ENCODE measurements at regions of chr6 and their contacts with region 1.

Region 1: DNA sequence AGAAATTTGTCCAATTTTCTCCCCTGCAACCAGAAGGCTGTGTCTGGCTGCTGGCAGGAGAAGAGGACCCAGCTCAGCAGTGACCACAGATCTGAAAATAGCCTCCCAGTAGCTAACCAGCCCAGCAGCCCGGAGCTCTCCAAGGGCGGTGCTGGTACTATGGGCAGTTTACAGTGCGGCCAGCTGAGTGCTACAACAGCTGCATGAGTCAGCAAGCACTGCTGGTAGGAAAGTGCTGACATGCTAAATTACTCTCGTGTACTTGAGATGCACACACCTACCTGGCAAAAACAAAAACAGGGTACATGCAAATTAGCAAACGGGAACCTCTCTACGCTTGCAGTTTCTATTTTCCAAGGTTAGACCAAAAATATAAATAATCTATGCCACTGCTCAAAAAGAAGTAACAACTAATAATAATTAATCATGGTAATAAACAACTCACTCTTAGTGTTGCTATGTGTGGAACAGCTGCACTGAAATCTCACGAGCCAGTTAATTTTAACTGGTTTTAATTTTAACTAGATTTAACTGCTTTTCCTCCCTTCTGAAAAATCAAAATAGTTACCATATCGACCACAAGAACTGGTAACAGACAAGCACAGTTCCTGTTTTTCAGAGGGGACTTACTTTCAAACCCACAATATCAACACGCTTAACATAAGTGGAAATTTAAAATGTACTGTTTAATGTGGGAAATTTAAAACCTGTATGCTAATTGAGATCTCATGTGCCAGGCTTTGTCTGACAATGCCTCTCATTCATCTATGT is 10.8 kb downstream of the BACH2 start:
- DNase-seq: peak; percentile 73
- H3K4me3 ChIP-seq: peak overlapping the region; percentile 65
- H3K27ac ChIP-seq: peak overlapping the region; percentile 84
- H3K4me1 ChIP-seq: peaks cover 93% of the 10 kb centered on the region
- CTCF ChIP-seq: no peak

Region 2: GRCh38 chr6:89172131-89172530 is 1113.7 kb before region 1 on chr6:
- CTCF ChIA-PET with region 1: no interaction called
- POLR2A ChIA-PET with region 1: no interaction called
- intact Hi-C with region 1: no loop called
- DNase-seq: no peak
- H3K4me3 ChIP-seq: no peak overlapping the region
- H3K27ac ChIP-seq: no peak overlapping the region
- H3K4me1 ChIP-seq: no peaks in the 10 kb centered on the region
- CTCF ChIP-seq: no peak

Region 3: DNA sequence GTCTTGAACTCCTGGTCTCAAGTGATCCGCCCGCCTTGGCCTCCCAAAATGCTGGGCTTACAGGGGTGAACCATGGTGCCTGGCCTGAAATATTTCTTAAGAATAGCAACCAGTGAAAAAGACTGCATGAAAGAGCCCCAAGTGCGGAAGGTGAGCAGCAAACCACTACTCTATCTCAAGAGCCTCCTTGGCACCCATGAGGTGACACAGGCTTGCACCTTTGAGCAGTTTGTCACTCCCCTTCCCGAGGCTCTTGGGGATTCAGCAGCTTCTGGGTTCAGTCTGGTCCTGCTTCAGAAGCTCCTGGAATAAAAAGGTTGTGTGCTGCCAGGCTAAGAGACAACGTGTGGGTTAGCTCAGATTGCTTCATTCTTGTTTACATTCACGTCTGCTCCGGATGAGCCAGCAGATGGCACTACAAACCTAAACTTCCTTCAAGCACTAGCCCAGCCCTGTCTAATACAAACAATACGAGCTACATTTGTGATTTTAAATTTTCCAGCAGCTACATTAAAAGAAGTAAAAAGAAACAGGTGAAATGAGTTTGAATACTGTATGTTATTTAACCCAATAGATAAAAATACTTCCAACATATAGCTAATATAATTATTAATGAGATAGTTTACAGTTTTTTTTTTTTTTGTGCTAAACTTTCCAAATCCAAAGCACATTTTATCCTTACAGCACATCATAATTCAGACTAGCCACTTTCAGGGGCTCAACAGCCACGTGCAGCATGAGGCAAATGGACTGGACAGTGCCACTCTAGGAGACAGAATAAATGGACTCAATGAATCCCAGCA is 345.4 kb before region 1 on chr6:
- CTCF ChIA-PET with region 1: interaction called, 3 read pairs
- POLR2A ChIA-PET with region 1: interaction called, 4 read pairs
- intact Hi-C with region 1: loop called (anchors 1 kb)
- DNase-seq: peak; percentile 71
- H3K4me3 ChIP-seq: no peak overlapping the region
- H3K27ac ChIP-seq: no peak overlapping the region
- H3K4me1 ChIP-seq: no peaks in the 10 kb centered on the region
- CTCF ChIP-seq: peak; percentile 89

Region 4: DNA sequence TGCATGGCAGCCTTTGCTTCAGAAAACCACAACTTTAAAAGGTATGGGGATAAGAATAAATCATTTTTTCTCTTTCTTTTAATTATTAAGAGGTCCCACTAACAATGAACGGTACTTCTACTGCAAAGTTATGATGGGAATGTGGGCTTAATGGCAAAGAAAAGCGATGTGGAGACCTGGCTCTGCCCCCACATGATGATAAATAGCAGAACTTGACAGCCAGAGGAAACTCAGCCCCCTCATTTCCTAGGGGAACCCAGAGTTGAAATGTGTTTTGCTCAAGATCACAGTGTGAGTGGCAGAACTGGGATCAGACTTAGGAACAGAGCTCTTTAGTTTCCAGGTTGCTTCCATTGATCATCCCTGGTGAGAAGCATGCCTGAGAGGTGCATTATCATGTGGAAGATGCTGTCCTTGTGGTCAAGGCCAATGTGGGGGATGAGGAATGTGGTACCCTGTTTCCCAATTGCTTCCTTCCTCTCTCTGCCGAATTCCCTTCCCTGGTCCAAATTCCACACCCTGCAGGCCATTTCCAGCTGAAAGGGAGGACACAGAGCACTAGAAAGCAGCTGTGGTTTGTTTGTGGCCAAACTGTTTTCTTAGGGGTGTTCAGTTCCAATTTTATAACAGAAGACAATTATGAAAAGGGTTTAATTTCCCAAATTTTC is 55.1 kb before region 1 on chr6:
- CTCF ChIA-PET with region 1: no interaction called
- POLR2A ChIA-PET with region 1: no interaction called
- intact Hi-C with region 1: no loop called
- DNase-seq: no peak
- H3K4me3 ChIP-seq: no peak overlapping the region
- H3K27ac ChIP-seq: no peak overlapping the region
- H3K4me1 ChIP-seq: peaks cover 11% of the 10 kb centered on the region
- CTCF ChIP-seq: no peak

Region 5: GRCh38 chr6:90274451-90275030 is 11.3 kb before region 1 on chr6:
- CTCF ChIA-PET with region 1: no interaction called
- POLR2A ChIA-PET with region 1: interaction called, 25 read pairs
- intact Hi-C with region 1: no loop called
- DNase-seq: peak; percentile 84
- H3K4me3 ChIP-seq: peak overlapping the region; percentile 52
- H3K27ac ChIP-seq: peak overlapping the region; percentile 79
- H3K4me1 ChIP-seq: peaks cover 87% of the 10 kb centered on the region
- CTCF ChIP-seq: peak; percentile 71

Region 6: DNA sequence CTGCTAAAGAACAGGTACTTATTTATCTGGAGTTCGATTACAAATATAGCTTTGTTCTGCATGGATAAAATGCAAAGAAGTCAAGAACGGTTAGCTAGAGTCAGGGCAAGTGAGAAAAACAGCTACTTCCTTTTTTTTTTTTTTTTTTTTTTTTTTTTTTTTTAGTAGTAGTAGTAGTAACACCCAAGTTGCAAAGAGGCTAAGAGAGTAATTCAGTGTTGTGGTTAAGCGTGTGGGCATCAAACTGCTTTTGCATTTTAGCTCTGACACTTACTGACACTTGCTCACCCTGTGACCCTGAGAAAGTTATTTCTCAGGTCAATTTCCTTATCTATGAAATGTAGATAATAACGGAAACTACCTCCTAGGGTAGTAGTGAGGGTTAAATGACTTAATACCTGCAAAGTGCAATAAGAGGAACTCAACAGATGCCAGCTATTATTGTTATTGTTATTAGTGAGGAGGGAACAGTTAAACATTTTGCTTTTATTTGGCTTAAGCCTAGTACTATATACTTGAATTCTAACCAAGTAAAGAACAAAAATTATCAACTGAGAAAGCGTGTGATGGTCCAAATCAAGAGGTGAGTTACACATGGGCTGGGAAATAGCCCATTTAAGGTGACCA is 97.5 kb after region 1 on chr6:
- CTCF ChIA-PET with region 1: no interaction called
- POLR2A ChIA-PET with region 1: interaction called, 13 read pairs
- intact Hi-C with region 1: no loop called
- DNase-seq: peak; percentile 89
- H3K4me3 ChIP-seq: peak overlapping the region; percentile 59
- H3K27ac ChIP-seq: peak overlapping the region; percentile 97
- H3K4me1 ChIP-seq: peaks cover 97% of the 10 kb centered on the region
- CTCF ChIP-seq: no peak

Region 7: GRCh38 chr6:90458353-90459224 is 172.8 kb after region 1 on chr6:
- CTCF ChIA-PET with region 1: no interaction called
- POLR2A ChIA-PET with region 1: interaction called, 3 read pairs
- intact Hi-C with region 1: loop called (anchors 5 kb)
- DNase-seq: peak; percentile 67
- H3K4me3 ChIP-seq: peak overlapping the region; percentile 30
- H3K27ac ChIP-seq: no peak overlapping the region
- H3K4me1 ChIP-seq: peaks cover 40% of the 10 kb centered on the region
- CTCF ChIP-seq: no peak

Measured in OCI-LY7 (cell line).